ENCODE measurements at regions of chr5 and their contacts with region 1.

Region 1: GRCh38 chr5:149367249-149367971 is 9.6 kb downstream of the PCYOX1L start:
- DNase-seq: no peak
- H3K4me3 ChIP-seq: no peak overlapping the region
- H3K27ac ChIP-seq: no peak overlapping the region
- H3K27me3 ChIP-seq: no peaks in the 10 kb centered on the region
- CTCF ChIP-seq: peak; percentile 93

Region 2: DNA sequence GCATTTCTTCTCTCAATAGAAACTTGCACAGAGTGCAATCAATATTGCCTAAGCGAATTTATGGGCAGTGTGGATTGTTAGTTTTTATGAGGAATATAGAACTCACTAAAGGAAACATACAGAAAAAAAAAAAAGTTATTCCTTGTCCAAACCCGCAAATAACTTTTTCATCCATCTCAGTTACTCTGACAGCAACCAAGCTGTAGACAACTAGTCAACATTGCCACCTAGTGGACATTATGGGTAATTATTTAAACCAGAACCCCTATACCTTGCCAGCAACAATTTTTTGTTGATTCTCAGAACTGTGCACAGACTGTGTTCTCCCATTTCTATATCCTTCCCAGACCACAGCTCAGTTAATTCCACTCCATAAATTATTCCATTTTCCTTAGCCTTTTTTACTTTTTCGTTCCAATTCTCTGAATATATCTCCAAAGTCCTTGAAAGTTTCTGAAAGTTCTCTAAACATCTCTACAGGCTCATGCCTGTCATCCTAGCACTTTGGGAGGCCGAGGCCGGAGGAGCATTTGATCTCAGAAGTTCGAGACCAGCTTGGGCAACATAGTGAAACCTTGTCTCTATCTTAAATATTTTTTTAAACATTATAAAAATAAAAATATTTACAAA is 98.4 kb before region 1 on chr5:
- CTCF ChIA-PET with region 1: interaction called, 17 read pairs
- POLR2A ChIA-PET with region 1: no interaction called
- DNase-seq: no peak
- H3K4me3 ChIP-seq: no peak overlapping the region
- H3K27ac ChIP-seq: no peak overlapping the region
- H3K27me3 ChIP-seq: peaks cover 3% of the 10 kb centered on the region
- CTCF ChIP-seq: peak; percentile 74

Region 3: DNA sequence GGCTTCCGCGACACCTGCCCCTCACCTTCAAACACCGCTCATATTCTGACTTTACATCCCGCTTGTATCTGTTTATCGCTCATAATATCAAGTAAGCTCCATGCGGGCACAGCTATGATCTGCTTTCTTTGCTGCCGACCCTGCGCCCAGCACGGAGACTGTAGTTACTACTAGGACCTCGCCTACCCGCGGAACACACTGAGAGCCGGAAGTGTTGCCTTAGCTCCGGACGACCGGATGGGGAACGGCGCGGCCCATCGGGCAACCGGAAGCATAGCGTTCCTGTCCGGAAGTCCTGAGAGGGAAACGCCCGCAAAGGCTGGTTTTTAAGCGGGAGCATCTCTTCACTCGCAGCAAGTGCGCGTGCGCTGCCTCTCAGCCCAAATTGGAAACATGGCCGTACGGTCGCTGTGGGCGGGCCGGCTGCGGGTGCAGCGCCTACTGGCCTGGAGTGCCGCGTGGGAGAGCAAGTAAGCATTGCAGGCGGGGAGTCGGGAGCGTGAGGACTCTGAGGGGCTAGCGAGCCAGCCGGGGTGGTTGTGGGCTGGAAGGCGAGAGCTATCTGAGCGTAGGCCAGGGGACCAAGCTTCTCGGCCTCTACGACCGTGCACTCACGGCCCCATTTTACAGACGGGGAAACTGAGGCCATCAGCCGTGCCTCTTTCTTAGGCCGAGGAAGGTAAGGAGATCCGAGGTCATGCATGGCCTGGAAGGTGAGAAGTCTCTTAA is 22.1 kb before region 1 on chr5 and contains the start of gene GRPEL2:
- CTCF ChIA-PET with region 1: interaction called, 12 read pairs
- POLR2A ChIA-PET with region 1: no interaction called
- DNase-seq: peak; percentile 94
- H3K4me3 ChIP-seq: peak within 1 kb of the TSS; percentile 98
- H3K27ac ChIP-seq: peak within 1 kb of the TSS; percentile 88
- H3K27me3 ChIP-seq: no peaks in the 10 kb centered on the region
- CTCF ChIP-seq: 0 out of 2 replicates have a peak, but pooled peaks have one; percentile 5
- polyA plus RNA-seq, gene GRPEL2: 15.0 and 21.6 TPM in 2 replicates

Region 4: DNA sequence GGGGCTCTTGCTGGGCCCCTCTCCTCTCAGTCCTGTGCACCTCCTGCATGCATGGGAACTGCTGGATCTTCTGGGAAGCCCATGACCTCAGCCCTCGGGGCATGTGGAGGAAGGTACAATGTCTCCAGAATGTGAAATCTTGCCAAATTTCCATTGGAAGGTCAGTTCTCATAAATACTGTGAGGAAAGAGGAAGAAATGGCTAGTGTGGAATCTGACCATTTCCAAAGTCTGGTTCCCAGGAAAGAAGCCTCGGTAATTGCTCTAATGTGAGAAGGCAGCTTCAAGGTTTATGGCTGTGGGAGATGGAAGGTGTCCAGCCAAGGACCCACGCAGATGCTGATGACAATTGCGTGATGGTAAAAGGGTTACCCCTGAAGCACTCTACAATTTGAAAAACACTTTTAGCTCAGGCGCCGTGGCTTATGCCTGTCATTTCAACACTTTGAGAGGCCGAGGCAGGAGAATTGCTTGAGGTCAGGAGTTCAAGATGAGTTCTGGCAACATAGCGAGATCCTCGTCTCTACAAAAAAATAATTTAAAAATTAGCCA is 19.7 kb after region 1 on chr5:
- CTCF ChIA-PET with region 1: interaction called, 41 read pairs
- POLR2A ChIA-PET with region 1: interaction called, 3 read pairs
- DNase-seq: no peak
- H3K4me3 ChIP-seq: no peak overlapping the region
- H3K27ac ChIP-seq: peak overlapping the region; percentile 40
- H3K27me3 ChIP-seq: no peaks in the 10 kb centered on the region
- CTCF ChIP-seq: no peak

Region 5: GRCh38 chr5:149434162-149435014 is 67.0 kb after region 1 on chr5:
- CTCF ChIA-PET with region 1: interaction called, 81 read pairs
- POLR2A ChIA-PET with region 1: interaction called, 31 read pairs
- DNase-seq: peak; percentile 76
- H3K4me3 ChIP-seq: no peak overlapping the region
- H3K27ac ChIP-seq: peak overlapping the region; percentile 84
- H3K27me3 ChIP-seq: no peaks in the 10 kb centered on the region
- CTCF ChIP-seq: peak; percentile 91

Region 6: GRCh38 chr5:149503006-149503405 is 135.6 kb after region 1 on chr5:
- CTCF ChIA-PET with region 1: no interaction called
- POLR2A ChIA-PET with region 1: no interaction called
- DNase-seq: no peak
- H3K4me3 ChIP-seq: no peak overlapping the region
- H3K27ac ChIP-seq: no peak overlapping the region
- H3K27me3 ChIP-seq: no peaks in the 10 kb centered on the region
- CTCF ChIP-seq: no peak

Region 7: DNA sequence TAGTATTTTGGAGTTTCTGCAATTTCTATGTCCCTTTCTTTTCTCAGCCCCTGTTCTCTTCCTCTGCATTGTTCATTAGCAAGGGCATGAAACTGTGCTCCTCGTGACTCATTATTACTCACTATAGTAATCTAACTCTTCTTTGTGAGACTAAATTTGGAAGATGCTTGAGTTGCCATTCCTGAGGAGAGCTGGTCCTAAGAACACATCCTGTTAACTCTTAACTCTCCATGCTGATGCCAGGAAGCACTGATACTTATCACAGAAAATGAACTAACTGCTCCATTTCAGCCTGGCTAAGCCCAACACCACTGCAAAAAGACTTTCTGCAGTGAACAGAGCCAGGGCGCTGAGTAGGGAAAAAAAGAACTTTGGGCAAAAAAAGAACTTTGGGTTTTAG is 194.4 kb after region 1 on chr5:
- CTCF ChIA-PET with region 1: interaction called, 24 read pairs
- POLR2A ChIA-PET with region 1: no interaction called
- DNase-seq: peak; percentile 84
- H3K4me3 ChIP-seq: no peak overlapping the region; the same call in 1 of the 2 replicates
- H3K27ac ChIP-seq: peak overlapping the region; percentile 90
- H3K27me3 ChIP-seq: no peaks in the 10 kb centered on the region
- CTCF ChIP-seq: no peak

Region 8: DNA sequence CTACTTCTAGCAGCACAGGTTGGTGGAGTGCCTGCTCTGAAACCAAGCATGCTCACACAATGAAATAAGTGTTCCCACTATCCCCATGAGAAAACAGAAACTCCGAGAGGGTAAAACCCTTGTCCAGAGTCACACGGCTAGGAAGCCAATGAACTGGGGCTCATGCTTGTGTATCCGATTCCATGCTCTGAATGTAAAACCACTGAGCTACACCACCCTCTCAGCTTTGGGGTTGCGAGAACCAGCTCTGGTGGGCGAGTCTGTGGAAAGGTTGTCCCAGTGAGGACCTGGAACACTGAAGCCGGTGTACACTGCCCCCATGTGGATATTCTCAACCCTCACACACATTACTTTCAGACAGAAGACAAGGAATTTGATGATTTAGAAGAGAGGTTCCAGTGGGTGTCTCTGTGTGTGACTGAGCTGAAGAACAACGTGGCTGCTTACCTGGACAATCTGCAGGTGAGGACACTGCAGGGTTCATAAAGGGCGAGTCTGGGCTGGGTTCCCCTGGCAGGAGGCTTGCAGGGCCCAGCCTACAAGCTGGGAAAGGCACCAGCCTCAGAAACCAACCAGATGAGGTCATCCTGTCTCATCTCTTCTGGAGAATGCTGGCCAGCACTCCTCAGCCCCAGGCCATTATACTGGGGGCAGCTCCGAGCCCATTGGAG is 251.3 kb after region 1 on chr5:
- CTCF ChIA-PET with region 1: interaction called, 18 read pairs
- POLR2A ChIA-PET with region 1: no interaction called
- DNase-seq: peak; percentile 24
- H3K4me3 ChIP-seq: no peak overlapping the region
- H3K27ac ChIP-seq: no peak overlapping the region
- H3K27me3 ChIP-seq: peaks cover 13% of the 10 kb centered on the region
- CTCF ChIP-seq: peak; percentile 79

Measured in AG04450 (cell line).